Calu3 (cell line): ENCODE measurements at regions of chr9 and their contacts with region 1.

Region 1: DNA sequence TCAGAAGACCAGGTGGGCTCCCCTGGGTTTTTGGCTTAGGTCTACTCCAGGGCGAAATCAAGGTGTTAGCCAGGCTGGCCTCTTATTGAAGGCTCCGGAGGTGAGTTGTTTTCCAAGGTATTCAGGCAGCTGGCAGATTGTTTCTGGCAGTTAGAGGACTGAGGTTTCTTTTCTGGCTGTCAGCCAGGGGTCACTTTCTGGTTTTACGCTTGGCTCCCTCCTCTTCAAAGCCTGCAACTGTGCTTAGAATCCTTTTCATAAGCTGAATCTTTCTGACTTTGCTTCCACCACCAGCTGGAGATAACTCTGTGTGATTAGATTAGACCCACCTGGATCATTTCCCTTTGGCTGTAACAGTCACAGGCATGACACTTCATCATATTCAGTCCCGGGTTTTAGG is 24.6 kb downstream of the RFK start:
- DNase-seq: peak; percentile 65
- H3K4me3 Mint-ChIP-seq: no peak overlapping the region
- H3K27ac Mint-ChIP-seq: no peak overlapping the region
- H3K4me1 Mint-ChIP-seq: peaks cover 52% of the 10 kb centered on the region
- H3K27me3 Mint-ChIP-seq: no peaks in the 10 kb centered on the region
- CTCF ChIP-seq: no peak

Region 2: DNA sequence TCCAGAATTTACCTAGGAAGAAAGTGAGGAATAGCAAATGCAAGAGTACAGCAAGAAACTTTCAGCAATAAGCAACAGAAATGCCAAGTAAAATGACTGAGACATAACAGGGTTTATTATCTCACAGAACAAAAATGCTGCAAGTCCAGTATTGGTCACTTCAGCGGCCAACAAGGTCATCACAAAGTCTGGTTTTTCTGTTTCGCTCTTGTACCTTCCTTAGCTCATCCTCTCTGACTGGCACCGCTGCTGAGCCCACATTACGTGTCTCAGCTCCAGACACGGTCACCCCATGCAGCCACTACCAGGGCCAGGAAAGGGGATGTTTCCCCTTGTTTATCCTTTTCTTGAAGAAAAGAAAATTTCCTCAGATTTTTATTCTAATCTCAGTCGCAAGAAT is 58.0 kb before region 1 on chr9:
- CTCF ChIA-PET with region 1: no interaction called
- intact Hi-C with region 1: loop called (anchors 10 kb)
- DNase-seq: no peak
- H3K4me3 Mint-ChIP-seq: no peak overlapping the region
- H3K27ac Mint-ChIP-seq: peak overlapping the region; percentile 61
- H3K4me1 Mint-ChIP-seq: peaks cover 12% of the 10 kb centered on the region
- H3K27me3 Mint-ChIP-seq: no peaks in the 10 kb centered on the region
- CTCF ChIP-seq: no peak

Region 3: GRCh38 chr9:76393963-76394679 is 24.5 kb after region 1 on chr9 and contains the start of gene RFK:
- CTCF ChIA-PET with region 1: no interaction called
- intact Hi-C with region 1: loop called (anchors 2 kb)
- DNase-seq: peak; percentile 94
- H3K4me3 Mint-ChIP-seq: peak within 1 kb of the TSS; percentile 82
- H3K27ac Mint-ChIP-seq: peak within 1 kb of the TSS; percentile 91
- H3K4me1 Mint-ChIP-seq: no peaks in the 10 kb centered on the region
- H3K27me3 Mint-ChIP-seq: no peaks in the 10 kb centered on the region
- CTCF ChIP-seq: no peak
- total RNA-seq, gene RFK: 13.0 and 14.0 TPM in 2 replicates